SK-N-SH (cell line): ENCODE measurements at regions of chr18 and their contacts with region 1.

Region 1: GRCh38 chr18:78875268-78875997 is 104.2 kb upstream of the SALL3 start:
- DNase-seq: peak; percentile 38
- H3K4me3 ChIP-seq: no peak overlapping the region
- H3K27ac ChIP-seq: no peak overlapping the region
- H3K4me1 ChIP-seq: no peaks in the 10 kb centered on the region
- H3K27me3 ChIP-seq: peaks cover 26% of the 10 kb centered on the region; the same call in 1 of the 2 replicates
- CTCF ChIP-seq: peak; percentile 64
- EP300 ChIP-seq: no peak
- RAD21 ChIP-seq: peak; percentile 41

Region 2: DNA sequence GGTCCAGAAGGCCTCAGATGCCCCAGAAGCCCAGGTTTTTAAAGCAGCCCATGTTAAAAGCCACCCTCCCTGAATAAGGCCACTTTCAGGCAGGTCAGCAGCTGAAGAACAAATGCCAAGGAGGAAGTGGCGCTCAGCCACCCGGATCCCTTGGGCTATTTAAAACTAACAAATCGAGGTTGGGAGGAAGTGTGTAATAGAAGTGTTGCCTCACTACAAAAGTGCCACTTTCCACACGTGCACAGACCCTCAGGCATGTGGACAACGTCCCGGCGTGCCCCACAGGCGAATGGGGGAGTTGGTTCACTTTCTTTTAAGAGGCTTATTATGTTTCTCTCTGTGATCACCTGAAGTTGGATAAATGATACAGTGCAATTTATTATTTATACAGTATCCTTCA is 69.6 kb before region 1 on chr18:
- CTCF ChIA-PET with region 1: no interaction called
- POLR2A ChIA-PET with region 1: no interaction called
- DNase-seq: no peak
- H3K4me3 ChIP-seq: no peak overlapping the region
- H3K27ac ChIP-seq: no peak overlapping the region
- H3K4me1 ChIP-seq: no peaks in the 10 kb centered on the region
- H3K27me3 ChIP-seq: peaks cover 11% of the 10 kb centered on the region; the same call in 1 of the 2 replicates
- CTCF ChIP-seq: no peak
- EP300 ChIP-seq: no peak
- RAD21 ChIP-seq: no peak

Region 3: DNA sequence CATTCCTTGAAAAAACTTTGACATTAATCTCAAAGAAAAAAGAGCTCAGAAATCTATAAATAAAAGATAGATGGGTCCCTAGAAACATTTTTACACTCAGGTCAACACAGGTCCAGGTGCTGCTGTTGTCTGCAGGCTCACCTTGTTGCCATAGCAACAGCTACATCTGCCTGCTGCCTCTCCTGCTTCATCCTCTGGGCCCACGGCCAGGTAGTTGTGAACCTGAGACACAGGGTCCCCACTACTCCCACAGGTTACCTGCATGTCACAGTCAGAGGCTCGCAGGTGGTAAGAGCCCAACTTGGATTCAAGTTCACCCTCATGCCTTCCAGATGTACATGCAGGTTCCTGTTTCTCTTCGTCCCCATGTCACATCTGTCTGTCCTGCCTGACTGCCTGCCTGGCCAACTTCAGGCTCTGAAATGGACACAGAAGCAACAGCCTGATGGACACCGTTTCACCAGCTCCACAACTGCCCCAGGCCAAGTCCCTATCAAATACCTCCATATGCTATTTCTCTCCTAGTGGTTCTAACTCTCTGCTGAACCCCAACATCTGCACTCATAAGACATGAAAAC is 15.8 kb after region 1 on chr18:
- CTCF ChIA-PET with region 1: interaction called, 14 read pairs
- POLR2A ChIA-PET with region 1: no interaction called
- DNase-seq: no peak
- H3K4me3 ChIP-seq: no peak overlapping the region
- H3K27ac ChIP-seq: no peak overlapping the region
- H3K4me1 ChIP-seq: no peaks in the 10 kb centered on the region
- H3K27me3 ChIP-seq: peaks cover 11% of the 10 kb centered on the region; the same call in 1 of the 2 replicates
- CTCF ChIP-seq: no peak
- EP300 ChIP-seq: no peak
- RAD21 ChIP-seq: no peak

Region 4: DNA sequence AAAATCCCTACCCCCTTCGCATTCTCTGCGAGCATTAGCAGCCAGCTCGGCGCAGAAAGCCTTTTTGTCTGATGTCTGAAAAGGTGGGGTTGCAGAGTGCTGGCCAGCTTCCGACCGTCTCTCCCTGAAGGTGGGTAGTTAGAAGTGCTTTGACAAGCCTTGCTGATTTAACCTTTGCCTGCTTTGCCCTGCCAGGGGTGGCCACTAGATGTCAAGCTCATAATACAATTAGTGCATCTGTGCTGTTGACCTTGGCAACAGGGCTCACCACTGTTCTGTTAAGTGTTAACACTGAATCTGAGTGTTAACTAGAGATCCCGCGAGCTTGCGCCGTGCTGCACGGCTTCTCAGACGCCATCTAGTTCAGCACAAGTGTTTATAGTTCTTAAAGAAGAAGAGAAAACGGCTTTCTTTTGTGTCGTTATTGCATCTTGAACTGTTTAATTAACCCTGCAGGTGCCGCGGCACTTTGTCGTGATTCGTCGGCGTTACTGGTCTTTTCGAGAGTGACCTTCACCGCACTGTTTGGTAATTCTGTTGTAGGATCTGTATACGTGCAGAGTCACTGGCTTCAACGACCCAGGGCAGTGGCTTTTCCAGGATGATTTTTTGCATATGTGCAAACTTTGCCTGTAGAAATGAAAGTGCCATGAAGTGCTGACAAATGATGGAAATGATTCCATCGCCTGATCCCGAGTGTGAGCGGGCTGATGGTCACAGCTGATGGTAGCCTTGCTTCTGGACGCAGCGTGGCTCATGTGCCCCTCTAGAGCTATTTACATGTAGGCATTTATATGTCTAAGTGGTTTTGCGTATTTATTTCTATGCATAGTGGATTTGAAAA is 109.7 kb after region 1 on chr18:
- CTCF ChIA-PET with region 1: interaction called, 22 read pairs
- POLR2A ChIA-PET with region 1: no interaction called
- DNase-seq: no peak
- H3K4me3 ChIP-seq: no peak overlapping the region
- H3K27ac ChIP-seq: no peak overlapping the region
- H3K4me1 ChIP-seq: no peaks in the 10 kb centered on the region
- H3K27me3 ChIP-seq: peaks cover 61% of the 10 kb centered on the region
- CTCF ChIP-seq: 0 out of 2 replicates have a peak, but pooled peaks have one; percentile 14
- EP300 ChIP-seq: no peak
- RAD21 ChIP-seq: no peak

Region 5: GRCh38 chr18:79374408-79375171 is 499.2 kb after region 1 on chr18:
- CTCF ChIA-PET with region 1: no interaction called
- POLR2A ChIA-PET with region 1: no interaction called
- DNase-seq: no peak
- H3K4me3 ChIP-seq: no peak overlapping the region
- H3K27ac ChIP-seq: no peak overlapping the region
- H3K4me1 ChIP-seq: no peaks in the 10 kb centered on the region
- H3K27me3 ChIP-seq: no peaks in the 10 kb centered on the region
- CTCF ChIP-seq: no peak
- EP300 ChIP-seq: no peak
- RAD21 ChIP-seq: no peak